Activated T-helper 2 cell treated with anti-CD3 and anti-CD28 coated beads, Interferon-gamma antibody, Interleukin-2, Interleukin-4, amounts not matched to agents 10 μg/mL and 5 μg/mL and 100 μg/mL, durations not matched to agents 14 hours and 24 hours and 36 hours (primary cell): ENCODE measurements at regions of chr21 and their contacts with region 1.

Region 1: DNA sequence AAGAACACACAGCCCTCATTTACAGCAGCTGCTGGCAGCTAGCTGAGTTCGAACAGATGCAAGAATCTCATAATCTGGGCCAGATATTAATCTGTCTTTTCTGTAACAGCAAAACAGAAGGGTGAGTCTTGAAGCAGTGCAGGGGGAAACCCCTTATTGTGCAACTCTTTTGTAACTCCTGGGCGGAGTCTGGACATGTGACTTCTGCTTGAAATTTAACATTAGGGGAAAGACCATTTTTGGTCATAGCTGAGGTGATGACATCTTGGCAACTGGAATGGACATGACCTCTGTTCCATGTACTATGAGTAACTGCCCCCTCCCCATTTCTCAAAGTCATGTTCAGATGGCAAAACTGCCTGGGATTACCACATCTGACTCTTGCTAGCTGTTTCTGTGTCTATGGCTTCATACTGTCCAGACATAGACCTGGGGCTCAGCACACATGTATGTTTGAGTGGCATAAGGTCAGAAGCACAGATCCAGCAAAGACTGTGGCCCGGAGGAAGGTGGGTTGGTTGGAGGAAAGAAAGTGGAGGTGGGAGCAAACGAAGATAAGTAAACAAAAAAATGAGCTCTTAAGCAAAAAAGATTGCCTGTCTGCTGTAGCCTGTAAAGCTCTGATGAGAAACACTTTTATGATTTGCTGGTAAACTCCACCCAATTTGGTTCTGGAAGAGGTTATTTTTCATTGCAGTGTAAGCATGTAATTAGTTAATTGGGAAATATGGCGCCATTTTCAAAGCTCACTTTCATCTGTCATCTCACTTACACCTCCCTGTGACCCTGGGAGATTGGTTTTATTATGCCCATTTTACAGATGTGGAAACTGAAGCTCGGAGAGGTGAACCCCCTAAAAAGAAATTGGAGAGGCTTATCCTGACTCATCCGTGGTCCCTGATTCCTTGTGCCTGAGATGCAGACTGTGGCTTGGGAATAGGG is 26.1 kb downstream of the ETS2 start:
- DNase-seq: peak; percentile 59
- H3K4me3 Mint-ChIP-seq: no peak overlapping the region
- H3K27ac Mint-ChIP-seq: peak overlapping the region; percentile 50
- H3K4me1 Mint-ChIP-seq: peaks cover 16% of the 10 kb centered on the region
- H3K27me3 Mint-ChIP-seq: no peaks in the 10 kb centered on the region

Region 2: DNA sequence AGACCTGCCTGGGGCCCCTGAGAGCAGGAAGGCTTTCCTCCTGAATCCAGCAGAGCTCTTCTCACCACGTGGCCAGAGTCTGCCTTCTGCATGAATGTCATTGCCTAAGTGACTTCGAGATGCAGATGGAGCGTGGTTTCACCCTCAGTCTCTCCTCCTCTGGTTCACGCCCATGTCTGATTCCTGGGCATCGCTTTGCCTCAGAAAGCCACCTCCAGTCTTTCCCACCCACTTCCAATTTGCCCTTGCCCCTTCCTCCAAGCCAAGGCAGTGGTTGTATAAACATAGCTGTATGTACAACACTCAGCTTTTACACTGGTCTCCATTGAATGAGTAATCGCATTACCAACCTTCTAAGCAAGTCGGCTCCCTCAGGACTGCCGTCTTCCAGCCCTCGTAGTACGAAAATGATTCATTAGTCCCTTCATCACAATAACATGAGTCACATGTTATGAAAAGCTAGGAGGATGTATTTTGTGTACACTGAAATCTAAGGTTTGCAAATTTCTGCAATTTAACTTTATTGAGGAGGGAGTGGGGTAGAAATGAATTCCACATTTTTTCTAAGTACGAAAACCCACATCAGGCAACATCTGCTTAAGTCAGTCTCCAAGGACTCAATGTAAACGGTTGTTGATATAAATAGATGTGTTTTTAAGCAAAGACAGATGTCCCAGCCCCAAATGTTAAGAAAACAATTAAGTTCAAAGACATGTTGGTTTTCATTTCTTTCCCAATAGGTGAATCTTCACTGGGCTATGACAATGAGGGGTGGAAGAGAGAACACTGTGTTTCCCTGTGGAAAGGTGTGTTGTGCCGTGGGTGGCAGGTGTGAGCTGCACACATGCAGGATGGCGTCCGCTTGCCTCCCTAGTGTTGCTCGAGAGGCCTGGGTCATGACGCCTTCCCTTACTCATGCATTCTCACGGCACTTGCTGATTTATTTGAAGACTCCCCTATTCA is 58.4 kb before region 1 on chr21:
- intact Hi-C with region 1: loop called (anchors 1 kb)
- DNase-seq: no peak
- H3K4me3 Mint-ChIP-seq: no peak overlapping the region
- H3K27ac Mint-ChIP-seq: peak overlapping the region; percentile 87
- H3K4me1 Mint-ChIP-seq: peaks cover 59% of the 10 kb centered on the region
- H3K27me3 Mint-ChIP-seq: no peaks in the 10 kb centered on the region

Region 3: DNA sequence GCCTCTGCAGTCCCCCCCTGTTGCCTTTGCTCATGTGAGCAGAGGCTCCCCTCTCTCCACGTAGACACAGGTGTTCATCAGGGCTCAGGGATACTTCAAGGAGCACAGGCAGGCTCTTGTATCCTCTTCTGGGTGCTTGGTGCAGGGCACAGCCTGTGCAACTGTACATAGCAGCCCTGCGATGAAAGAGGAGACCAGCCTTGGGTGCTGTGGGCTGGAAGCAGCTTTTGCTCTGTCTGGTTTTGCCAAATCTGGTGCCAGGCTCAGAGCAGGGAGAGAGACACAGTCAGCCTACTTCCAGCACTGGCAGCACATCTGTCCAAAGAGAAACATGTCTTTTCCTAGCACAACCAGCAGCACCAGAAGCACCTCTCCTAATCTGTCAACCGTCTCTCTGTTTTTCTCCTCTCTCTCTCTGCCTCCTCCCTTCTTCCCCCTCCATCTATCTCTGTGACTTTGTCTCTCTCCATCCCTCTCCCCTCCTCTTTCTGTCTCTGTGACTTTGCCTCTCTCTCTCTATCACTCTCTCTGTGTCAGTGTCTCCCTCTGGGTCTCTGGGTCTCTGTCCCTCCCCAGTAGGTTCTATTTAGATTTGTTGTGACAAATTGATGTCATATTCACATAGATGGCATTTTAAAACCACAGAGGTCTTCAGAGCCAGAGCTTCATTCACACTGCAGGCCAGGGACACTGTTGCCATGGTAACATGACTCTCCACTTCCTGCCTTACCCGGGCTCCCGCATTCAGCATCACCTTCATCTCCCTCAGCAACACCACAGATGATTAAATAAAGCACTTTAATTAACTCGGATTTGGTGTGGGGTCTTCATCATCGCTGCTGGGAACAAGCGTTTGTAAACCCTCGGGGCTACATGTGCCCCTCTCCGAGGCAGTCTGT is 106.3 kb after region 1 on chr21:
- intact Hi-C with region 1: loop called (anchors 5 kb)
- DNase-seq: peak; percentile 70
- H3K4me3 Mint-ChIP-seq: peak overlapping the region; percentile 65
- H3K27ac Mint-ChIP-seq: peak overlapping the region; percentile 96
- H3K4me1 Mint-ChIP-seq: peaks cover 34% of the 10 kb centered on the region
- H3K27me3 Mint-ChIP-seq: no peaks in the 10 kb centered on the region